ENCODE measurements at regions of chr3 and their contacts with region 1.

Region 1: GRCh38 chr3:157913741-157914150 is 192.5 kb downstream of the SHOX2 start:
- DNase-seq: no peak
- H3K4me3 Mint-ChIP-seq: no peak overlapping the region
- H3K27ac Mint-ChIP-seq: no peak overlapping the region
- H3K4me1 Mint-ChIP-seq: no peaks in the 10 kb centered on the region
- H3K27me3 Mint-ChIP-seq: no peaks in the 10 kb centered on the region
- CTCF ChIP-seq: no peak

Region 2: GRCh38 chr3:157261000-157261399 is 652.7 kb before region 1 on chr3:
- CTCF ChIA-PET with region 1: no interaction called
- intact Hi-C with region 1: no loop called
- DNase-seq: no peak
- H3K4me3 Mint-ChIP-seq: no peak overlapping the region
- H3K27ac Mint-ChIP-seq: no peak overlapping the region
- H3K4me1 Mint-ChIP-seq: peaks cover 8% of the 10 kb centered on the region
- H3K27me3 Mint-ChIP-seq: no peaks in the 10 kb centered on the region
- CTCF ChIP-seq: no peak

Region 3: DNA sequence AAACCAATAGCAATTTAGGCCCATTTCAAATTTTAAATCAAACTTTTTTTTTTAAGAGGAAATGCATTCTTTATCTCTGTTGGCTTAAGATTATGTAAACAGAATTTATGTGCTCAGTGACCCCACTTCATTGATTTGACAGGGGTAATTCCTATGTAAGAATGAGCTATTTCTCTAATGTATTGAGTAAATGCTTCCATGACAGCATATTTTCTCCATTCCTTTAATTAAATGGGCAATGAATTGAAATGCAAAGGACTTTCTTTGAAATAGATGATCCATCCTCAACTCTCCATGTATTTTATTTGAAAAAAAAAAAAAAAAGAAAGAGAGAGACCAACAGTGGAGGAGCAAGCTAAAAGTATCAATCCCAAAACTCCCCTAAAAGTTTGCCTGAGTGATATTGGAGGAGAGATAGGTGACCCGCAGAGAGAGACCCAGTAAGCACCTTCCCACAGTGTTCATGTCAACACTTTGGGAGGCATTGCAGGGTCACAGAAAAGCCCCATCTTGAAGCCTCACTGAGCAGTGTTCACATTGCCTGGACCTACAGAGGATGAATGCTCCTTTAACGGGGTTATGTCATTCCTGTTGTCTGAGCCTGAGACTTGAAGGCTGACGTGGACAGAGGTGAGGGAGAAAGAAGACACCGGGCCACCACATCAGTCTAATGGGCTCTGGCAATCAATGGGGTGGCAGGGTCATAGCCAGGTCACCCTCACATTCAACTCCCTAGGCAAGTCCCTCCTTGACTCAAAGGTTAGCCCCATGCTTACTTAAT is 16.4 kb after region 1 on chr3:
- CTCF ChIA-PET with region 1: interaction called, 11 read pairs
- intact Hi-C with region 1: no loop called
- DNase-seq: no peak
- H3K4me3 Mint-ChIP-seq: no peak overlapping the region
- H3K27ac Mint-ChIP-seq: no peak overlapping the region
- H3K4me1 Mint-ChIP-seq: peaks cover 10% of the 10 kb centered on the region
- H3K27me3 Mint-ChIP-seq: no peaks in the 10 kb centered on the region
- CTCF ChIP-seq: no peak

Region 4: DNA sequence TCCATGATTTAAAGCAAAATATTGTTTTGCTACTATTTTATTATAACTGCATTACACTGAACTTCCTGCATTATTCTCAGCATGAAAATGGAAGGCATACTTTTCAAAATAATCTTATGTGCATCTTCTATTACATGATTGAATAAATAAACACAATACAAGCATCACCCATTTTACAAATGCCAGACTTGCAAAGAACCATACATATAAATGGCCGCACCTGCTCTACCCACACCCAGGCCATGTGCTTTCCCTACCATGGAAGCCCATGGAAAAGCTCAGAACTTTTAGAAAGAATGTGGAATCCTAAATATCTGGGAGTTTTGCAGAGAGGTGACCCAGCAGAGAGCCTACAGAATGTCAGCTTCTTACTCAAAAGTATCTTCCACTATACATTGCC is 65.3 kb after region 1 on chr3:
- CTCF ChIA-PET with region 1: no interaction called
- intact Hi-C with region 1: loop called (anchors 10 kb)
- DNase-seq: no peak
- H3K4me3 Mint-ChIP-seq: no peak overlapping the region
- H3K27ac Mint-ChIP-seq: no peak overlapping the region
- H3K4me1 Mint-ChIP-seq: no peaks in the 10 kb centered on the region
- H3K27me3 Mint-ChIP-seq: no peaks in the 10 kb centered on the region
- CTCF ChIP-seq: no peak

Region 5: GRCh38 chr3:158140396-158140795 is 226.7 kb after region 1 on chr3:
- CTCF ChIA-PET with region 1: no interaction called
- intact Hi-C with region 1: no loop called
- DNase-seq: no peak
- H3K4me3 Mint-ChIP-seq: no peak overlapping the region
- H3K27ac Mint-ChIP-seq: no peak overlapping the region
- H3K4me1 Mint-ChIP-seq: no peaks in the 10 kb centered on the region
- H3K27me3 Mint-ChIP-seq: no peaks in the 10 kb centered on the region
- CTCF ChIP-seq: no peak

Measured in Calu3 (cell line).